Activated CD4-positive, alpha-beta T cell treated with anti-CD3 and anti-CD28 coated beads for 36 hours (primary cell): ENCODE measurements at regions of chr2 and their contacts with region 1.

Region 1: DNA sequence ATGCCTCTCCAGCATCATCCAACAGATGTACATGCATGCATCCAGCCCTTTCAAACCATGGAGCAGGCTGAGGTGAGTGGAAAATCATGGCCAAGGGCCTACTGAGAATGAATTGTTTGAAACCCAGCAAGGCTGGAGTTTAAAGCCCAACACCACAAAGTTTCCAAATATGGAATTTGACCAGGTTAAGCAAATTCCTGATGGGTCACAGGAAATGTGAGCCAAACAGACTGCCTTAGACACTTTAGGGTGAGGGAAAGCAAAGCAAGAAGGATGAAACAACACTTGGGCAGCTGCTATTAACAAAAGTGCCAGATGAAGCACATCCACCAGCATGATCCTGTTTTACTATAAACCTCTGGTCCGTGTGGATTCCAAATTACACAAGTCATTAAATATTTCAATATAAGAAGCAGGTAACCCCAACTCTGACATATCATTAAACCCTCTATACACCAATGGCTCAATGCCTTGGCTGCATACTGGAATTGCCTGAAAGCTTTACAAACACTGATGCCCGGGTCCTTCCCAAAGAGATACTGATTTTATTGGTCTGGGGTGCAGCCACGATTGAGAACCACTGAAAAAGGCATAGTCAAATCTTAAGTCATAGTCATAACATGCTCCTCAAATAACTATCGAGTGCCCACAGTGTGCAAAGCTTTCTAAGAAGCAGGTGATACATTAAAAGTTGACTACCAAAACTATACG is 9.1 kb downstream of the KLF7 start:
- DNase-seq: peak; percentile 65
- ATAC-seq: peak; percentile 83
- H3K4me3 Mint-ChIP-seq: no peak overlapping the region
- H3K27ac Mint-ChIP-seq: peak overlapping the region; percentile 8
- H3K4me1 Mint-ChIP-seq: peaks cover 79% of the 10 kb centered on the region
- H3K27me3 Mint-ChIP-seq: no peaks in the 10 kb centered on the region

Region 2: DNA sequence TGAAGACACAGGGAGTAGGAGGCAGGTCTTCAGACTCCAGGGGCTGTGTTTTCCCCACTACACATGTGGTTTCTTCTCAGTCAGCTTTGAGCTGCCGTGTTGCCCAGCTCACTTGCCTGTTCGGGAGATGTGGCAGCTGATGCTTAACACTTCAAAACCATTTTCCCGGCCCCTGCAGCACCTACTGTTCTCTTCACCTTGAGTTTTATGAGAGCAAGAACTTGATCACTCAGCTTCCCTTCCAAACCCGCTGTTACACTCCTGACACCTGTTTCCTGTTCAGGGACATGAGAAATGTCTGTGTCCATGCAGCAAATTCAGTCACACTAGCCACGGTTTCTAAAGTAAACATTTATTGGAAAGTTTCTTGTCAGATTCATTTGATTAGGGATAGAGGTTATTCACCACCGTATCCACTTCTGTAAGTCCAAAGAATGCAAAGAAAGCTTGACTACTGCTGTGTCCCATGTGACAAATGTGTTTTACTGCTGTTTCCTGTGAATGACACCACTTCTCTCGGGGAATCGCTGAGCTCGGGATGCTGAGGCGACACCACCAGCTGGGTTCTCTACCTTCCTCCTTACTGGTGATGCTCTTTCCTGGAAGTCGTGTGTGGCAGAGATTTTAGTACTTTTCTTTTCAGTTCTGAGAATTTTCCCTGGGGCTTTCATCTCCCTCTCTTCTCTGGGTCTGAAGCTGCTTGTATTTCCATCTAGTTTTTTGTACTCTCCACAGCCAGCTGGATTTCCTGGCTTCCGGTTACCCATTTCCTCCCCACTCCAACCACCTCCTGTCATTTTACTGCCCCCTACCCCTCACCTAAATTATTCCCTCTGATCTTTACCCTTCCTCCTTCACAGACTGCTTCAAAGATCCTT is 82.6 kb before region 1 on chr2:
- CTCF ChIA-PET with region 1: no interaction called
- POLR2A ChIA-PET with region 1: no interaction called
- intact Hi-C with region 1: loop called in 1 of 2 experiments (anchors 5 kb)
- DNase-seq: peak; percentile 61
- ATAC-seq: peak; percentile 80
- H3K4me3 Mint-ChIP-seq: peak overlapping the region; percentile 45
- H3K27ac Mint-ChIP-seq: peak overlapping the region; percentile 87
- H3K4me1 Mint-ChIP-seq: peaks cover 34% of the 10 kb centered on the region
- H3K27me3 Mint-ChIP-seq: peaks cover 5% of the 10 kb centered on the region

Region 3: DNA sequence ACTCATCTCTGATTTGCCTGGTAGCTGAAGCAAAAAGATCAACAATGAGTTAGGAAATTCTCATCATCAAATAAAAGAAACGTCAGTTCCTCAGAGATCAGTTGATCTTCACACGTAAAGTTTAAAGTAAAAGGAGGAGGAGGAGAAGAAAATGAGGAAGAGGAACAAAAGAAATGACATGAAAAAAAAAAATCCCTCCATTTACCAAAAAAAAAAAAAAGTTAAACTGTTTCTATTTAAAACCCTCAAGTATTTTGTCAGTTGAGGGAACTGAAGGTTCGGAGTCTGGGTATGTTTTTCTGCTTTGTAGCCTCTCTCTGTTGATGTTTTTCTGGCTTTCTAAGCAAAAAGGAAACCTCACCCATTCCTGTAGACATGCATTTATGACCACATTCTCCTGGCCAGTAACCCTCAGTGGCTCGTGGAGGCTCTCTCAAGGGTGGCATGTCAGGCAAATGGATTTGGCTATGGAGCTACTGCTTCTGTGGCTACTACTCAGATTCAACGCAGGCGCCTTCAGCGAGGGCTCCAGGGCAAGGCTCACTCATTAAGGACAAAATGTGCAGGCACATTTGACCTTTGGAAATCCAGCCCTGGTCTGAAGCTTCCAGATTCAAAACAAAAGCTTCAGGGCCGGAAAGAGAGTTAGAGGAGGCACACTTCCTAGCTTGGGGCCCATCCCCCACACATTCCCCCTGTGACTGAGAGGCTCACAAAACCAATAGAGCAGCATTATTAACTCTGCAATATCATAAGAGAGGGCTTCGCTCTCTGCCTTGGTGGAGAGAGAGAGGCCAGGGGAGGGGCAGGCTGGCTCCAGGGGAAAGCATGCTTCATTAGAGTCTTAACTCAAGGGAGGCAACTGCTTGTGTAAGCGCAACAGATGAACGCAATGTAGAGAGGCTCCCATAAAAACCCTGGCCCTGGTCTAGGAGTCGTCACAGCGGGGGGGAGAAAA is 13.1 kb before region 1 on chr2:
- CTCF ChIA-PET with region 1: interaction called, 13 read pairs
- POLR2A ChIA-PET with region 1: interaction called, 3 read pairs
- intact Hi-C with region 1: loop called (anchors 1 to 2 kb)
- DNase-seq: peak; percentile 69
- ATAC-seq: peak; percentile 61
- H3K4me3 Mint-ChIP-seq: peak overlapping the region; percentile 66
- H3K27ac Mint-ChIP-seq: peak overlapping the region; percentile 97
- H3K4me1 Mint-ChIP-seq: peaks cover 66% of the 10 kb centered on the region
- H3K27me3 Mint-ChIP-seq: no peaks in the 10 kb centered on the region

Region 4: DNA sequence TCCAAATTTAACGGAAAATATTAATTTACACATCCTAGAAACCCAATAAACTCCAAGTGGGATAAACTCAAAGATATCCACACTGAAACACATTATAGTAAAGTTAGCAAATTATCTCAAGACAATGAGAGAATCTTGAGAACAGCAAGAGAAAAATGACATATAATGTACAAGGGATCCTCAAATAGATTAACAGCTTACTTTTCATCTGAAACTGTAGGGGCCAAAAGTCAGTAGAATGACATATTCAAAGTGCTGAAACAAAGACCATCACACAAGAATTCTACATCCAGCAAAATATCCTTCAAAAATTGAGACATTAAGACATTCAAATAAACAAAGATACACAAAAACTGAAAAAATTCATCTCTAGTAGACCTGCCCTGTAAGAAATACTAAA is 487.3 kb after region 1 on chr2:
- CTCF ChIA-PET with region 1: no interaction called
- POLR2A ChIA-PET with region 1: no interaction called
- intact Hi-C with region 1: no loop called
- DNase-seq: no peak
- ATAC-seq: no peak
- H3K4me3 Mint-ChIP-seq: no peak overlapping the region
- H3K27ac Mint-ChIP-seq: no peak overlapping the region
- H3K4me1 Mint-ChIP-seq: no peaks in the 10 kb centered on the region
- H3K27me3 Mint-ChIP-seq: no peaks in the 10 kb centered on the region